Tibial artery (tissue), 4 donors: ENCODE measurements at regions of chr18 and their contacts with region 1.

Region 1: GRCh38 chr18:11851146-11851805 is at the start of gene CHMP1B:
- DNase-seq: peak; percentile 98 to 99
- H3K4me3 ChIP-seq: peak within 1 kb of the TSS; percentile 78 to 87
- H3K27ac ChIP-seq: peak within 1 kb of the TSS; percentile 90 to 91
- H3K4me1 ChIP-seq: peaks cover 0 to 47% (median 21%) of the 10 kb centered on the region in 4 donors
- H3K27me3 ChIP-seq: no peaks in the 10 kb centered on the region
- CTCF ChIP-seq: peak in 1 of 2 experiments; percentile 6

Region 2: DNA sequence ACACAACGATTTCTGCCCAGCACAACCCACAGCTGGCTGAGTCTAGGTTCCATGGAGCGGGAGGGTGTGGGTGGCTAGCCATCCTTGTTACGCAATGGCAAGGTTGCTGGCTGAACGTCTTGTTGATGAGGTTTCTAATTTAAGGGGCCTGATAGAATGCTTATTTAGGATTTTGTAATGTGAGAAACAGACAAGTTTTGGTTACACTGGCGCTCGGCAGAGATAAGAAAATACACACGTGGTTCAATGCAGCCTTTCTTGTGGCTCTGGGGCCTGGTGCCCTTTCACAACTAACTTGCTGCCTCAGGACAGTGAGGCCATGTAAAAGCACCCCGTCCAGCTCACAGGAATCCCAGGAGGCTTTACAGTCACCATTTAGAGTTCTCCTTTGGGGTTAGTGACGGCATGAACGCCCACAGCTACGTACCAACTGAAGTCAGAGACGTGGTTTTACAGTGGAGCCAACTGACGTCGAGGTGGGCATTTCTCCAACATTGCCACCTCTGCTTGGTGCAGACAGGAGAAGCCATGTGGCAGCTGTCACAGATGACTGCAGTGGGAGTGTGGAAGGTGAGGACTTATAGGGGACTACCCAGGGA is 672.2 kb before region 1 on chr18:
- intact Hi-C with region 1: loop called (anchors 10 kb)
- DNase-seq: peak; percentile 90 to 94
- H3K4me3 ChIP-seq: peak overlapping the region in 1 of 2 donors; percentile 1
- H3K27ac ChIP-seq: peak overlapping the region; percentile 78 to 79
- H3K4me1 ChIP-seq: peaks cover 0 to 60% (median 35%) of the 10 kb centered on the region in 4 donors
- H3K27me3 ChIP-seq: no peaks in the 10 kb centered on the region
- CTCF ChIP-seq: no peak

Region 3: GRCh38 chr18:11688989-11689668 is 162.1 kb before region 1 on chr18 and contains the start of gene GNAL:
- intact Hi-C with region 1: loop called (anchors 10 kb)
- DNase-seq: peak; percentile 83 to 88
- H3K4me3 ChIP-seq: peak within 1 kb of the TSS; percentile 65 to 78
- H3K27ac ChIP-seq: peak within 1 kb of the TSS; percentile 67 to 77
- H3K4me1 ChIP-seq: peaks cover 0 to 15% (median 7%) of the 10 kb centered on the region in 4 donors
- H3K27me3 ChIP-seq: no peaks in the 10 kb centered on the region
- CTCF ChIP-seq: no peak

Region 4: GRCh38 chr18:11908182-11909060 is 57.1 kb after region 1 on chr18 and contains the start of gene MPPE1:
- intact Hi-C with region 1: loop called (anchors 10 kb)
- DNase-seq: peak; percentile 87 to 94
- H3K4me3 ChIP-seq: peak within 1 kb of the TSS; percentile 78 to 97
- H3K27ac ChIP-seq: peak within 1 kb of the TSS; percentile 99 to 100
- H3K4me1 ChIP-seq: peaks cover 0 to 19% (median 12%) of the 10 kb centered on the region in 4 donors
- H3K27me3 ChIP-seq: no peaks in the 10 kb centered on the region
- CTCF ChIP-seq: no peak

Region 5: GRCh38 chr18:11937874-11938478 is 86.7 kb after region 1 on chr18:
- intact Hi-C with region 1: no loop called
- DNase-seq: peak; percentile 73 to 79
- H3K4me3 ChIP-seq: no peak overlapping the region
- H3K27ac ChIP-seq: no peak overlapping the region
- H3K4me1 ChIP-seq: no peaks in the 10 kb centered on the region
- H3K27me3 ChIP-seq: no peaks in the 10 kb centered on the region
- CTCF ChIP-seq: peak; percentile 82 to 85